ENCODE measurements at regions of chr12 and their contacts with region 1.

Region 1: GRCh38 chr12:101570047-101570446 is 24.7 kb upstream of the MYBPC1 start:
- DNase-seq: peak in 1 of 42 donors; percentile 15

Region 2: DNA sequence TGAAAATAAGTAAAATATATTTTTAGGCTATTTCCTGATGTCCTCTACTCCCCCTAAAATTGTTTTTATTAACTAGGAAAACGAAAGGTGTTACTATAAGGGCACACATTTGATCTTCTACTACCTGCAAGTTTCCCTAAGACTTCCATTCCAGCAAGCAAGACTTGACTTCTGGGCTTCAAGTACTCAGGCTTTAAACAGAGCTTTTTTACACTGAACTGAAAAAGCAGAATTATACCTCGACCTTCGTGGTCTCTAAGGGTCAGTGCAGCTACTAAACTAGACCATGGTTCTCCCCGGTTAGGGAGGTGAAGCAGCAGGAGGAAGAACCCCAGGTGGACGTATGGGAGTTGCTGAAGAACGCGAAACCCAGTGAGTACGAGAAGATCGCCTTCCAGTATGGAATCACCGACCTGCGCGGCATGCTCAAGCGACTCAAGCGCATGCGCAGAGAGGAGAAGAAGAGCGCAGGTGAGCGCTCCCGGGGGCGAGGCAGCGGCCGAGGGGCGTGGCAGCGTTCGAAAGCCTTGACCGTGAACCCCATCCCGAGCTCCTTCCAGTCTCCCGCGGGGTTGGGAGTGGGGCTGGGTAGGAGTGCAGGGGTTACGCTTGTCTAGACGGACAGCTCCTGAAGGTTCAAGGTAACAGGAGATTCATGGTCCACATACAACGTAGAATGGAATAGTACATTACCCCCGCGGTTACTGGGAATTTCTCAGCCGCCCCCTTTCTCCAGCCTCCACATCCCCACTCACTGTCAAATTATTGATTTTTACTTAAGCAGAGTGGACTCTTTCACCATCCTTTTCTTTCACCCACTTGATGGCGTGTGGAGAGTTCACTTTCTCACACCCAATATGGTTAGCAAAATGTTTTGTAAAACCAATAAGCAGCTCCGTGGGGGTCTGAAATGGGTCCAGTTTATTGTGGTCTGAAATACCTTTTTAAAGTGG is 72.3 kb after region 1 on chr12:
- intact Hi-C with region 1: no loop called
- DNase-seq: peak in 6 of 42 donors; percentile 2 to 44 (median 16)

Region 3: DNA sequence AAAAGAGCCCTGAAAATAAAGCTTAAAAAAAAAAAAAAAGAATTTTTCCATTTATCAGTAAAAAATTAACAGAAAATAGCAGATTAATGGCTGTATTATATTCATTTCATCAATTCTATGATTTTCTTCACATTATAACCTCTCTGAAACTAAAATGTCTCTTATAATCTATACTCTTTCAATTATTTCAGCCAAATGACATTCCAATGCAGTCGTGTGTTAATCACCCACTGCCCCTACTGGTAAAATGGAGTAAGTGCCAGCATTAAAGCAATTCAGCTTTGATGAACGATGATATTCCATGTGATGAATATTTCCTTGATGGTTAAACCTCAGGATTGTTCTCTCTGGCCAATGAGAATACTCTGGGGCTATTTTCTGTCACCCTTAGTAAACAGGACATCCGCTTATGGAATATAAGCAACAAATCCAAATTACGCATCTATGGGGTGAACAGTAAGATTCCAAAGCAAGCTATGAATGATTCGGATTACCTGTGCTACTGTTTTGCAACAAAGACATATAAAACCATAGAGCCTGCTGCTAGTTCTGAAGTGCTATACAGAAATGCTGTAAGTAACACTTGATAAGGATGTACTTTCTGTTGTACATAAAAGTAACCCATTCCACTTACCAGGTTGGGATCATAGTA is 189.5 kb after region 1 on chr12:
- intact Hi-C with region 1: loop called (anchors 10 kb)
- DNase-seq: no peak

Region 4: DNA sequence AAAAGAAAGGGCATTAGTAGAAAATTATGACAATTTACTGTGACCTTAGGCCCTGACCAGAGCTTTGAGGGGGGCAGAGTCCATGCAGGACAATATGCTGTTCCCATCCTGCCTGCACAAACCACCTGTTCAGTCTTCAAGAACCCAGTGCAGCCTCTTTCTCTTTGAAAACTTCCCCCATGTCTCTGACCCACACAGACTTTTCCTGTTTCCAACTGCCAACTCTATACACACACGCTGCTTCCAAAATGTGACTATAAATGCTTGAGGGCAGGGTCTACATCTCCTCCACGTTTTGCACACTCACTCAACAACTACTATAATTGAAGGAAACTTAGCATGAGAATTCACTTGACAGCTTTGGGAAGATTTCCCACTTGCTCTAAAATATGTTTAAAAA is 205.8 kb after region 1 on chr12:
- intact Hi-C with region 1: no loop called
- DNase-seq: no peak